ENCODE measurements at regions of chr1 and their contacts with region 1.

Region 1: GRCh38 chr1:174743654-174744561 is 255.8 kb upstream of the CACYBP start:
- DNase-seq: no peak
- ATAC-seq: peak in 2 of 8 donors; percentile 23 to 56
- H3K4me3 ChIP-seq: no peak overlapping the region
- H3K27ac ChIP-seq: no peak overlapping the region
- H3K4me1 ChIP-seq: peaks cover 0 to 27% (median 3%) of the 10 kb centered on the region in 9 donors
- H3K27me3 ChIP-seq: no peaks in the 10 kb centered on the region
- CTCF ChIP-seq: peak; percentile 58 to 82 (median 73)

Region 2: GRCh38 chr1:174262349-174263241 is 481.3 kb before region 1 on chr1:
- intact Hi-C with region 1: loop called (anchors 2 to 5 kb)
- DNase-seq: no peak
- ATAC-seq: peak in 7 of 8 donors; percentile 47 to 77 (median 53)
- H3K4me3 ChIP-seq: no peak overlapping the region
- H3K27ac ChIP-seq: peak overlapping the region in 4 of 10 donors; percentile 4 to 33 (median 10)
- H3K4me1 ChIP-seq: peaks cover 0 to 21% (median 6%) of the 10 kb centered on the region in 9 donors
- H3K27me3 ChIP-seq: no peaks in the 10 kb centered on the region
- CTCF ChIP-seq: peak; percentile 44 to 77 (median 68)